CD14-positive monocyte (primary cell): ENCODE measurements at regions of chr10 and their contacts with region 1.

Region 1: GRCh38 chr10:13371897-13372470 is 23.9 kb upstream of the SEPHS1 start:
- DNase-seq: peak; percentile 47 to 69 (median 57)
- H3K4me3 ChIP-seq: no peak overlapping the region
- H3K4me3 Mint-ChIP-seq: no peak overlapping the region
- H3K27ac ChIP-seq: no peak overlapping the region
- H3K27ac Mint-ChIP-seq: no peak overlapping the region
- H3K4me1 ChIP-seq: no peaks in the 10 kb centered on the region
- H3K4me1 Mint-ChIP-seq: no peaks in the 10 kb centered on the region
- H3K27me3 ChIP-seq: no peaks in the 10 kb centered on the region
- H3K27me3 Mint-ChIP-seq: peaks cover 2 to 11% (median 6%) of the 10 kb centered on the region in 3 donors
- CTCF ChIP-seq: peak; percentile 89

Region 2: GRCh38 chr10:13440185-13441061 is 68.4 kb after region 1 on chr10:
- intact Hi-C with region 1: loop called (anchors 5 kb)
- DNase-seq: peak; percentile 12 to 37 (median 25)
- H3K4me3 ChIP-seq: peak overlapping the region in 1 of 3 experiments; percentile 42
- H3K4me3 Mint-ChIP-seq: peak overlapping the region; percentile 24 to 83
- H3K27ac ChIP-seq: no peak overlapping the region
- H3K27ac Mint-ChIP-seq: no peak overlapping the region
- H3K4me1 ChIP-seq: peaks cover 10 to 11% of the 10 kb centered on the region in 2 donors
- H3K4me1 Mint-ChIP-seq: peaks cover 12% of the 10 kb centered on the region
- H3K27me3 ChIP-seq: peaks cover 17 to 31% of the 10 kb centered on the region in 2 donors
- H3K27me3 Mint-ChIP-seq: peaks cover 29 to 51% (median 34%) of the 10 kb centered on the region in 3 donors
- CTCF ChIP-seq: peak; percentile 92